ENCODE measurements at regions of chr11 and their contacts with region 1.

Region 1: GRCh38 chr11:125141686-125142535 is 22.6 kb upstream of the PKNOX2 start:
- DNase-seq: peak; percentile 66
- ATAC-seq: peak; percentile 98
- H3K4me3 Mint-ChIP-seq: no peak overlapping the region
- H3K27ac Mint-ChIP-seq: no peak overlapping the region
- H3K4me1 Mint-ChIP-seq: peaks cover 2% of the 10 kb centered on the region
- H3K27me3 Mint-ChIP-seq: peaks cover 21% of the 10 kb centered on the region
- CTCF ChIP-seq: peak; percentile 98

Region 2: GRCh38 chr11:124961972-124962609 is 179.8 kb before region 1 on chr11:
- CTCF ChIA-PET with region 1: interaction called, 19 read pairs
- POLR2A ChIA-PET with region 1: no interaction called
- intact Hi-C with region 1: loop called (anchors 2 kb)
- DNase-seq: no peak
- ATAC-seq: peak; percentile 93
- H3K4me3 Mint-ChIP-seq: no peak overlapping the region
- H3K27ac Mint-ChIP-seq: no peak overlapping the region
- H3K4me1 Mint-ChIP-seq: no peaks in the 10 kb centered on the region
- H3K27me3 Mint-ChIP-seq: no peaks in the 10 kb centered on the region
- CTCF ChIP-seq: peak; percentile 62

Region 3: GRCh38 chr11:125111343-125112207 is 30.3 kb before region 1 on chr11 and contains the start of gene TMEM218:
- CTCF ChIA-PET with region 1: interaction called, 33 read pairs
- POLR2A ChIA-PET with region 1: interaction called, 3 read pairs
- intact Hi-C with region 1: no loop called
- DNase-seq: peak; percentile 98
- ATAC-seq: peak; percentile 97
- H3K4me3 Mint-ChIP-seq: peak within 1 kb of the TSS; percentile 85
- H3K27ac Mint-ChIP-seq: peak within 1 kb of the TSS; percentile 91
- H3K4me1 Mint-ChIP-seq: peaks cover 17% of the 10 kb centered on the region
- H3K27me3 Mint-ChIP-seq: no peaks in the 10 kb centered on the region
- CTCF ChIP-seq: no peak
- total RNA-seq, gene TMEM218: 12.7 to 13.3 TPM

Region 4: GRCh38 chr11:125123947-125124617 is 17.8 kb before region 1 on chr11:
- CTCF ChIA-PET with region 1: interaction called, 57 read pairs
- POLR2A ChIA-PET with region 1: interaction called, 4 read pairs
- intact Hi-C with region 1: no loop called
- DNase-seq: peak; percentile 68
- ATAC-seq: peak; percentile 73
- H3K4me3 Mint-ChIP-seq: no peak overlapping the region
- H3K27ac Mint-ChIP-seq: no peak overlapping the region
- H3K4me1 Mint-ChIP-seq: peaks cover 3% of the 10 kb centered on the region
- H3K27me3 Mint-ChIP-seq: peaks cover 20% of the 10 kb centered on the region
- CTCF ChIP-seq: peak; percentile 54

Region 5: GRCh38 chr11:125179895-125180294 is 38.0 kb after region 1 on chr11:
- CTCF ChIA-PET with region 1: no interaction called
- POLR2A ChIA-PET with region 1: no interaction called
- intact Hi-C with region 1: no loop called
- DNase-seq: no peak
- ATAC-seq: no peak
- H3K4me3 Mint-ChIP-seq: no peak overlapping the region
- H3K27ac Mint-ChIP-seq: no peak overlapping the region
- H3K4me1 Mint-ChIP-seq: no peaks in the 10 kb centered on the region
- H3K27me3 Mint-ChIP-seq: peaks cover 37% of the 10 kb centered on the region
- CTCF ChIP-seq: no peak

Region 6: DNA sequence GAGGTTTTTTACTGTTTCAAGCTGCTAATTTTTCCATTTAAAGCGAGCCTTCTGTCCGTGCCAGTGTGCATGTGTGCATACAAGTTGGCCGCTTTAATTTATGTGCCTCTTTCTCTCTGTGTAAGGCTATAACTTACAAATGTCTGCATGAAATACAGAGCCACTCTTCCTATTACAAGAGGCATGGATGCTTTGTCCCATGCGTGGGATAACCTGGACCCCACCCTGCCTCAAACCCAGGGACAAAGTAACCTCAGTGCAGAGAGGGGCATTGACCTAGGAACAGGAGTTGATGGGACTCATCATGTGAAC is 51.5 kb after region 1 on chr11:
- CTCF ChIA-PET with region 1: no interaction called
- POLR2A ChIA-PET with region 1: no interaction called
- intact Hi-C with region 1: no loop called
- DNase-seq: no peak
- ATAC-seq: no peak
- H3K4me3 Mint-ChIP-seq: no peak overlapping the region
- H3K27ac Mint-ChIP-seq: no peak overlapping the region
- H3K4me1 Mint-ChIP-seq: no peaks in the 10 kb centered on the region
- H3K27me3 Mint-ChIP-seq: peaks cover 36% of the 10 kb centered on the region
- CTCF ChIP-seq: no peak

Region 7: DNA sequence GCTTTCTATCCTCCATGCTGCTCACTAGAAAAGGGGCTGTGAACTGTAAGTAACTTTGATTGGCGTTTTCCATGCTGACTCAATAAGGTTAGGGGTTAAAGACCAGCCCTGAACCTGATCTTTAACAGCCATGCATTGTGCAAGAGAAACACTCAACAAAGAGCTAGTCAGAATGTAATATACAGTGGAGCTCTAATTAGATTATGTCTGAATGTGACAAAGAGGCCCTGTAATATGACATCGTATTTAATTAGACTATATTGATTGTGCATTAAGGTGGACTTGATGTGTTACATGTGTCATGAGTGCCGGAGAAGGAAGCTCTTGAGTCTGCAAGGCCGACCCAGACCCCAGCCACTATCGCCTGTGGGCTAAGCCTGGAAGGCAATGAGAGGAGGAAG is 93.2 kb after region 1 on chr11:
- CTCF ChIA-PET with region 1: no interaction called
- POLR2A ChIA-PET with region 1: no interaction called
- intact Hi-C with region 1: no loop called
- DNase-seq: no peak
- ATAC-seq: no peak
- H3K4me3 Mint-ChIP-seq: no peak overlapping the region
- H3K27ac Mint-ChIP-seq: no peak overlapping the region
- H3K4me1 Mint-ChIP-seq: no peaks in the 10 kb centered on the region
- H3K27me3 Mint-ChIP-seq: peaks cover 18% of the 10 kb centered on the region
- CTCF ChIP-seq: no peak